Adrenal gland (tissue), 19 donors: ENCODE measurements at regions of chr5 and their contacts with region 1.

Region 1: DNA sequence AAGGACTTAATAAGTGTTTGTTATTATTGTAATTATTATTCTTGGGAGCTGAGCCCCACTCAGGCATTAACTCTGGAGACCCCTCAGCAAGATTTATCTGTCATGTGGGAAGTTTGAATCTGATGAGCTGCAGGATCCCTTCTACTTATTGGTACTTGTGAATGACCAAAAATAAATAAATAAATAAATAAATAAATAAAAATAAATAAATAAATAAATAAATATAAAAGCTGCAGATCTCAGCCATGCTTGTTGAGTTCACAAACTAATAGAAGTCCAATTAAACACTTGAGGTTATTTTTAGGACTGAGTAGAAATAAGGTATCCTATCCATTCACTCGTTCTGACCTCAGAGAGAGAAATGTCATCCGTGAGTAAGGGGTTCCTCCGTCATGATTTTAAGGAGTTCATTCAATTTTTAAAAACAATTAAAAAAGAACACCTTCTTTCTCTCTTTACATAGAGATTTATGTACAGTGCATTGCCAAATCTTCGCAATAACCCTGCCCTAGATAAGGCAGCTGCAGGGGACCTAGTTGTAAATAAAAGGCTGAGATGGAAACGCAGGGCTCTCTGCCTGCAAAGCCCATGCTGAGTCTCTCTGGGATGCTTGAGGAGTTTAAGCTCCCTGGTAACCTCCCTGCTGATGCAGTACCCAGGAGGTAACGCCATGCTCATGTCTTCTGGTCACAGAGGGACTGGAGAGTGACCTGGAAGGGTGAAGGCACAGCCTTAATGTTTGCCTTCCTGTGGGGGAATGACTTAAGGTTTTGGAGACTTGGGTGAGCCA is 1.2 kb downstream of the EFCAB9 start:
- DNase-seq: no peak
- H3K4me3 ChIP-seq: no peak overlapping the region
- H3K27ac ChIP-seq: no peak overlapping the region
- H3K4me1 ChIP-seq: no peaks in the 10 kb centered on the region
- H3K27me3 ChIP-seq: no peaks in the 10 kb centered on the region
- CTCF ChIP-seq: no peak
- POLR2A ChIP-seq: no peak

Region 2: DNA sequence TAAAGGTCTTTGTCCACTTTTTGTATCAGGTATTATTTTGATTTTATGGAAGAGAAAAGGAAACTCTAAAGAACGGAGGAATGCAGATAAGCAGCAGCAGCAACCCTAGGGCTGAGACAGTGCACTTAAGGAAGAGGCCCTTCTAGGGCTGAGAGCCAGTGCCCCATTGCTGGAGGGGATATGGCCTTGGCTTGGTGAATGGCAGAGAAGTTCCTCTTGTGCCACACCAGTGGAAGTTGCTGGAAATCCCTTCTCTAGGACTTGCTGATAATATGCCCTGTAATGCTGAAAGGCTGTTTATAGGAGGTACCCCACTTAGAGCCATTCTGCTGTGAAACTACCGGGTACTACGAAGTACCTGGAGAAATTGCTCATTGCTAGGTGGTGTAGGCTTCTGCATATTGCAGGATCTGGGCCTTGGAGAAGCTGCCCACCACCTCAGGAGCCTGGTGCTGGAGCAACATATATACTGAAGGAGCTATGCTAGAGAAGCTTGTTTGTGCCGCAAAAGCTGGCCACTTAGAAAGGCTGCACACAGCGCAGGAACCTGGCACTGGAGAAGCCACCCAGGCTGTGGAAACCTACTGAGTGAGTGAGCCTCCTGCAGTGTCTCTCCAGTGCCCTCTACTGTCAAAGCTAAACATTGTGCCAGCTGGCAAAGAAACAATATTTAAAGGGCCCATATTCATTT is 98.0 kb after region 1 on chr5:
- intact Hi-C with region 1: loop called in 1 of 2 experiments (anchors 10 kb)
- DNase-seq: peak; percentile 72 to 93 (median 85)
- H3K4me3 ChIP-seq: no peak overlapping the region
- H3K27ac ChIP-seq: peak overlapping the region in 2 of 5 donors; percentile 30 to 46
- H3K4me1 ChIP-seq: peaks cover 6 to 7% of the 10 kb centered on the region in 2 donors
- H3K27me3 ChIP-seq: no peaks in the 10 kb centered on the region
- CTCF ChIP-seq: peak; percentile 71 to 92 (median 88)
- POLR2A ChIP-seq: no peak